GM12878 (cell line): ENCODE measurements at regions of chr2 and their contacts with region 1.

Region 1: DNA sequence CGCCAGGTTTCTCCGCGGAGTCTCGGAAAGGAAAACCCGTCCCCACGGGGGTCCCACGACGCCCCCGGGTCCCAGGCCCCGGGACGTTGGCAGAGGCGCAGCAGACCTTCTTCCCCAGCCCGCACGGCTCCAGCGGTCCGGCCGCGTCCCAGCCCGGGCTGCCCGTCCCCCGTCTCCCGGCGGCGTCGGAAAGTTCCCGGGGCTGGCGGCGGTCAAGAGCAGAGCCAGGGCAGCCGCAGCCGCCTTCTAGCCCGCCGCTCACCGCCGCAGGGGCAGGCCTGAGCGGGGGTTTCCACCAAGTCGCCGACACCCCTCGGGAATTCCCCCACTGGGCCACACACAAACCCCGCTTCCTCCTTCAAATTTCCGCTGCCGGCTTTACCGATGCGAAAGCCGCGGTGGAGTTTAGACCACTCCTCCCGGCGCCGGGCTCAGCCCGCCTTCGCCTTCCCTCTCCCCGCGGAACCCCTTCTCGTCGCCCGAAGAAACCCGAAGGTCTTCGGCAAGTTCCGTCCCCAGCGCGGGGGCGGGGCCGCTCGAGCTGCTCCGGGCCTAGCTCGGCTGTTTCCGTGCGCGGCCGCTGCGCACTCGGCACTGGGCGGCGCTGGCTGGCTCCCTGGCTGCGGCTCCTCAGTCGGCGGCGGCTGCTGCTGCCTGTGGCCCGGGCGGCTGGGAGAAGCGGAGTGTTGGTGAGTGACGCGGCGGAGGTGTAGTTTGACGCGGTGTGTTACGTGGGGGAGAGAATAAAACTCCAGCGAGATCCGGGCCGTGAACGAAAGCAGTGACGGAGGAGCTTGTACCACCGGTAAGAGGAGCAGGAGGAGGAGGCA is at the start of gene CREB1:
- DNase-seq: peak; percentile 93
- ATAC-seq: peak; percentile 87
- H3K4me3 ChIP-seq: peak within 1 kb of the TSS; percentile 97
- H3K27ac ChIP-seq: peak within 1 kb of the TSS; percentile 99
- H3K4me1 ChIP-seq: peaks cover 26% of the 10 kb centered on the region
- H3K27me3 ChIP-seq: no peaks in the 10 kb centered on the region
- CTCF ChIP-seq: no peak; a peak in 1 of 6 replicates
- EP300 ChIP-seq: peak; percentile 77 to 79; a peak in 2 of 4 replicates
- POLR2A ChIP-seq: peak; percentile 94
- RAD21 ChIP-seq: no peak
- polyA plus RNA-seq, gene CREB1: 13.4 to 22.2 TPM

Region 2: DNA sequence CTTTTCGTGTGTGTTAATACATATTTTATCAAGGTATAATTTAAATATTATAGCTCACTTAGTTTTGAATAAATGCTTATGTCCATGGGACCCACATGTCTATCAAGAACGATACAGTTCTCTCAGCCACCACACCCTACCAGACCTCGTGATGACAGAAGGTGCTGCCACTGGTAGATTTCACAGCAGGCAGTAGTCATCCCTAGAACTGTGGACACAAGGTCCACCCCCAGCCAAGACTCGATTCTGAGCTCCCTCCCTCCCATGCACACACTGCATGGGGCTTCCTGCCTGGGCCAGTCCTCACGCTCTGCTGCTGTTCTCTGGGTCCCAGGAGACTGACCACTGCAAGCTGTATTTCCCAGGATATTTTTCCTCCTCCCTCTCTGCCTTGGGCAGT is 26.3 kb before region 1 on chr2:
- CTCF ChIA-PET with region 1: interaction called, 42 read pairs
- POLR2A ChIA-PET with region 1: interaction called, 90 read pairs
- RAD21 ChIA-PET with region 1: interaction called, 90 read pairs
- SMC1A ChIA-PET with region 1: interaction called, 170 read pairs
- in situ Hi-C with region 1: no loop called
- intact Hi-C with region 1: loop called (anchors 2 kb)
- DNase-seq: no peak
- ATAC-seq: peak; percentile 90
- H3K4me3 ChIP-seq: no peak overlapping the region
- H3K27ac ChIP-seq: peak overlapping the region; percentile 3; the same call in 1 of the 2 replicates
- H3K4me1 ChIP-seq: peaks cover 33% of the 10 kb centered on the region
- H3K27me3 ChIP-seq: no peaks in the 10 kb centered on the region
- CTCF ChIP-seq: no peak
- EP300 ChIP-seq: no peak
- POLR2A ChIP-seq: no peak
- RAD21 ChIP-seq: no peak

Region 3: DNA sequence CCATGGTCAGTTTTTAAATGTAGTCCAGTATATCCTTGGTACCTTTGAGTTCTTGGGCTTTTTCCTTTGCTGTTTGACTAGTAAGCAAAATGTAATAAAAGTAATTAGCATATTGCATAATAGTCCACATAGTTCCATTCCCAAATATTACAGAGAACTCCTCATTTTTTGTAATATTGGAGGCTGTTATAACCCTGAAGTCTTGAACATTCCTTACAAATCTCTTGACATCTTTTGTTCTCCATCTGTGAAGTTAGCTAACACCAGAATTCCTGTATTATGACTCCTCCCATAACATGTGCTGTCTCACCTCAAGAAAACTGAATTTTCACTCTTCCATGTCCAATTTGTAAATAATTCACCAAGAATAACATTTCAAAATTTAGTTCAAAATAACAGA is 17.3 kb after region 1 on chr2:
- CTCF ChIA-PET with region 1: interaction called, 10 read pairs
- POLR2A ChIA-PET with region 1: interaction called, 7 read pairs
- RAD21 ChIA-PET with region 1: interaction called, 3 read pairs
- SMC1A ChIA-PET with region 1: interaction called, 26 read pairs
- in situ Hi-C with region 1: no loop called
- intact Hi-C with region 1: no loop called
- DNase-seq: no peak
- ATAC-seq: no peak
- H3K4me3 ChIP-seq: no peak overlapping the region
- H3K27ac ChIP-seq: no peak overlapping the region
- H3K4me1 ChIP-seq: peaks cover 3% of the 10 kb centered on the region; the same call in 1 of the 2 replicates
- H3K27me3 ChIP-seq: no peaks in the 10 kb centered on the region
- CTCF ChIP-seq: no peak
- EP300 ChIP-seq: no peak
- POLR2A ChIP-seq: no peak
- RAD21 ChIP-seq: no peak

Region 4: GRCh38 chr2:207558106-207558505 is 28.6 kb after region 1 on chr2:
- CTCF ChIA-PET with region 1: interaction called, 8 read pairs
- POLR2A ChIA-PET with region 1: interaction called, 7 read pairs
- RAD21 ChIA-PET with region 1: interaction called, 4 read pairs
- SMC1A ChIA-PET with region 1: interaction called, 13 read pairs
- in situ Hi-C with region 1: no loop called
- intact Hi-C with region 1: no loop called
- DNase-seq: no peak
- ATAC-seq: no peak
- H3K4me3 ChIP-seq: no peak overlapping the region
- H3K27ac ChIP-seq: no peak overlapping the region
- H3K4me1 ChIP-seq: peaks cover 4% of the 10 kb centered on the region
- H3K27me3 ChIP-seq: no peaks in the 10 kb centered on the region
- CTCF ChIP-seq: no peak
- EP300 ChIP-seq: no peak
- POLR2A ChIP-seq: no peak
- RAD21 ChIP-seq: no peak

Region 5: DNA sequence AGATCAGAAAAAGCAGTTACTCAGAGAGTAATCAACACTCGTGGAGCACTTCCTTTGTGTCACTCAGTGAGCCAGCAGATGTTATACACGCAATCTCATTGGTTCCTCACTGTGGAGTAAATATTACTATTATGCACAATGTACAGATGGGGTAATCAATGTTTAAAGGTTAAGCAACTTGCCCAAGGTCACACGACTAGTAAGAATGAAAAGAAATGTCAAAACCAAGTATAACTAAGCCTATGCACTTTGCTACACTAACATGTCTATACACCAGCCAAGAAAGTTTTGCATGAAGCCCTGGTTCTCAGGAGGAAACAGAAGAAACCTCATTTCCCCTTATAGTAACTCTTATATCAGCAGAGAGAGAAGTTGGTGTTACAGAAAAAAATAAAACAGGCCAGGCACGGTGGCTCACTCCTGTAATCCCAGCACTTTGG is 90.2 kb after region 1 on chr2:
- CTCF ChIA-PET with region 1: interaction called, 5 read pairs
- POLR2A ChIA-PET with region 1: interaction called, 30 read pairs
- RAD21 ChIA-PET with region 1: interaction called, 30 read pairs
- SMC1A ChIA-PET with region 1: interaction called, 16 read pairs
- in situ Hi-C with region 1: no loop called
- intact Hi-C with region 1: no loop called
- DNase-seq: no peak
- ATAC-seq: peak; percentile 37
- H3K4me3 ChIP-seq: no peak overlapping the region
- H3K27ac ChIP-seq: peak overlapping the region; percentile 51
- H3K4me1 ChIP-seq: peaks cover 22% of the 10 kb centered on the region
- H3K27me3 ChIP-seq: no peaks in the 10 kb centered on the region
- CTCF ChIP-seq: no peak
- EP300 ChIP-seq: no peak
- POLR2A ChIP-seq: no peak
- RAD21 ChIP-seq: no peak

Region 6: GRCh38 chr2:207710814-207711740 is 181.5 kb after region 1 on chr2 and contains the start of gene CCNYL1:
- CTCF ChIA-PET with region 1: no interaction called
- POLR2A ChIA-PET with region 1: interaction called, 6 read pairs
- RAD21 ChIA-PET with region 1: interaction called, 6 read pairs
- SMC1A ChIA-PET with region 1: no interaction called
- in situ Hi-C with region 1: no loop called
- intact Hi-C with region 1: loop called (anchors 5 kb)
- DNase-seq: peak; percentile 93
- ATAC-seq: peak; percentile 99
- H3K4me3 ChIP-seq: peak within 1 kb of the TSS; percentile 96
- H3K27ac ChIP-seq: peak within 1 kb of the TSS; percentile 75
- H3K4me1 ChIP-seq: no peaks in the 10 kb centered on the region
- H3K27me3 ChIP-seq: no peaks in the 10 kb centered on the region
- CTCF ChIP-seq: no peak
- EP300 ChIP-seq: no peak
- POLR2A ChIP-seq: peak; percentile 87
- RAD21 ChIP-seq: no peak
- polyA plus RNA-seq, gene CCNYL1: 2.4 to 3.7 TPM